Transverse colon (tissue), 4 donors: ENCODE measurements at regions of chr1 and their contacts with region 1.

Region 1: DNA sequence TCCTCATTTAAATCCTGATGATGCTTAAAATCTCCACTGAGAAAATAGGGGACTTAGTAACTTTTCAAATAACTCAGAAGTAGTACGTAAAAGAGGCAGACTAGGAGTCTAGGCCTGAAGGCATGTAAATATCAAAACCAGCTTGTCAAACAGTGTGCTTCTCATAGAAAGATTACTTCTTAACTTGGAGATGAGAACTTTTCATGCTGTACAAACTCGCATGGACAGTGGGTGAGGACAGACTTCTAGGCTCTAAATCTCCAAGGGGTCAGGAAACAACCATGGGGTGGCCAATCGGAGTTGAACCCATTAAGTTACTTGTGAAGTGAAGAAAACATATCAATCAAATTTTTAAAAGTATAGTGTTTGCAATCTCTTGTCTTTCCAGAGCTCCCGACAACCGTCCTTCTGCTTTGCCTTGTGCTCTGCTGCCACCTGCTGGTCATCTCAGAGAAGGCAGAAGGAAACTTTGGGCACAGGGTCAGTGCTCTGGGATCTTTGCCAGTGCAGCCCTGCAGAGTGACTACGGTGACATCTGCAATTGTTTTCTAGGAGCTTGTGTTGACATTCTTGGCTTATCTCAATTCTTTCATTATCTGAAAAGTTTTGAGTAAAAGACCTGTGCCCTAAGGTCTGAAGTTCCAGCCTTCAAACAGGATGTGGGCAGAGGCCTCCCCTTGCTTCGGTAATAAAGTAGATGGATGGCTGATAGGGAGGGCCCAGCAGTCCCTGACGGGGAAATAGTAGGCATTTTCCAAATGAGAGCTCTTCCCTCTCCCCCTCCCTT is 105.1 kb upstream of the PDE4B start:
- DNase-seq: peak; percentile 90
- H3K4me3 ChIP-seq: no peak overlapping the region
- H3K27ac ChIP-seq: no peak overlapping the region
- H3K4me1 ChIP-seq: peaks cover 0 to 19% (median 10%) of the 10 kb centered on the region in 4 donors
- H3K27me3 ChIP-seq: no peaks in the 10 kb centered on the region
- CTCF ChIP-seq: peak; percentile 94 to 96 (median 95)
- EP300 ChIP-seq: no peak
- POLR2A ChIP-seq: no peak

Region 2: GRCh38 chr1:65067491-65068201 is 620.0 kb before region 1 on chr1:
- in situ Hi-C with region 1: loop called in 1 of 4 experiments (anchors 25 kb)
- intact Hi-C with region 1: no loop called
- DNase-seq: peak; percentile 71
- H3K4me3 ChIP-seq: peak overlapping the region; percentile 87 to 97 (median 92)
- H3K27ac ChIP-seq: peak overlapping the region; percentile 97 to 100 (median 98)
- H3K4me1 ChIP-seq: peaks cover 18 to 44% (median 23%) of the 10 kb centered on the region in 4 donors
- H3K27me3 ChIP-seq: no peaks in the 10 kb centered on the region
- CTCF ChIP-seq: no peak
- EP300 ChIP-seq: no peak
- POLR2A ChIP-seq: peak; percentile 88

Region 3: DNA sequence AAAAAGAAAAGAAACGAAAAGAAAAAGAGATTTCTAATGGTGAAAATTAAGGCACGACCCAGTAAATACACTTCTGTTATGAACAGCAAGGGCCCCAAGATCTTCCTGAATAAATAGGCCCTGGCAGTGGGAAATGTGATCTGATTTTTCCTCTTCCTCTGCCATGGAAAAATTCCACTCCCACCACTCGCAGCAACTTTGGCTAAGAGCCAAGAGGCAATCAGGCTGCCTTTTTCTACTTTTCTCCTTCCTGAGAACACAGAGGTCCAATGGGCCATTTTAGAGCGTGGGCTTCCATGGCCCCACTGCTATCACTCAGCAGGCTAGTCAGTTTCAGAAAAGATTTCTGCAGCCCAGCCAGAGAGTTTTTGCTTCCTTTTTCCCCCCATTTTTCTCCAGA is 573.3 kb before region 1 on chr1:
- in situ Hi-C with region 1: loop called in 1 of 4 experiments (anchors 25 kb)
- intact Hi-C with region 1: no loop called
- DNase-seq: no peak
- H3K4me3 ChIP-seq: no peak overlapping the region
- H3K27ac ChIP-seq: peak overlapping the region in 2 of 4 donors; percentile 34 to 41
- H3K4me1 ChIP-seq: peaks cover 0 to 4% (median 0%) of the 10 kb centered on the region in 4 donors
- H3K27me3 ChIP-seq: no peaks in the 10 kb centered on the region
- CTCF ChIP-seq: no peak
- EP300 ChIP-seq: no peak
- POLR2A ChIP-seq: no peak

Region 4: DNA sequence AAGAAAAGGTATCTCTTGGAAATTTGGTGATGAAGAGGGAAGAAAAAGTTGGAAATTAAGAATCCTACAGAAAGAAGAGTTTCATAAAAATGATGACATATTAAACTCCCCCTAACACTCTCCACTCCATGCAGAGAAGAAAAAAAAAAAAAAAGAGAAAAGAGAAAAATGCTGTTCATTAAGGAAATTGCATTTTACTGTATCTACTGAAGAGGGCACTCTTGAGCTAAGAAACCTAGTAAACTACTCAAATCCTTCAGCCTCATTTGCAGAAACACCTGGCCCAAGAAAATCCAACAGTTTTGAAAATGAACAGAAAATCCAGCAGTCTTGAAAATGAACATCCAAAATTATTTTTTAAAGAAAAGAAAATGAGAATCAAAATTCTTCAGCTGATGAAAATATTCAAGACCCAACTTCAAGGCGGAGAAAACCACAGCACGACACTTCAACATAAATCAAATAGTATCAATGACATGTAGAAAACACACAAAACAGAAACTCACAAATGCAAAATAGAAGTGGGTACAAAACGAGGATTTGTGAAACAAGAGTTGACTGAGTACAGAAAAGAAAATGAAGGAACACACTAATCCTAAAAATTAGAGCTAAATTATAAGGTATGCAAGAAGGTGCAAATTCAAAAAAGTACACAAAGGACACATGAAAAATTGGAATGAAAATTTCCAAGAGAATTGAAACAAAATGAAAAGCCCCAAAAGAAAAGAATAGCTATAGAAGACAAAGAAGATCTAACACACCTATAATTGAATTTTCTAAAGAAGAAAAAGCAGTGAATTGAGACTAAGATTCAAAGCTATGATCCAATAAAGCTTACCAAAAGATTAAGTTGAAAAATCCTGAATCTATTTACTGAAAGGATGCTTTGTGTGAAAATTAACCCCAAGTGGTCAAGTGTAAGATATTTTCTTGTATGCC is 451.5 kb before region 1 on chr1:
- in situ Hi-C with region 1: loop called (anchors 10 to 25 kb)
- intact Hi-C with region 1: loop called (anchors 10 kb)
- DNase-seq: no peak
- H3K4me3 ChIP-seq: no peak overlapping the region
- H3K27ac ChIP-seq: no peak overlapping the region
- H3K4me1 ChIP-seq: no peaks in the 10 kb centered on the region
- H3K27me3 ChIP-seq: no peaks in the 10 kb centered on the region
- CTCF ChIP-seq: peak; percentile 40 to 64 (median 44)
- EP300 ChIP-seq: no peak
- POLR2A ChIP-seq: no peak

Region 5: GRCh38 chr1:65431111-65431705 is 256.4 kb before region 1 on chr1:
- in situ Hi-C with region 1: loop called in 3 of 4 experiments (anchors 5 to 25 kb)
- intact Hi-C with region 1: no loop called
- DNase-seq: no peak
- H3K4me3 ChIP-seq: no peak overlapping the region
- H3K27ac ChIP-seq: no peak overlapping the region
- H3K4me1 ChIP-seq: peaks cover 0 to 7% (median 0%) of the 10 kb centered on the region in 4 donors
- H3K27me3 ChIP-seq: no peaks in the 10 kb centered on the region
- CTCF ChIP-seq: peak; percentile 34 to 54 (median 53)
- EP300 ChIP-seq: no peak
- POLR2A ChIP-seq: no peak

Region 6: GRCh38 chr1:65668368-65668767 is 19.3 kb before region 1 on chr1:
- in situ Hi-C with region 1: no loop called
- intact Hi-C with region 1: no loop called
- DNase-seq: no peak
- H3K4me3 ChIP-seq: no peak overlapping the region
- H3K27ac ChIP-seq: no peak overlapping the region
- H3K4me1 ChIP-seq: no peaks in the 10 kb centered on the region
- H3K27me3 ChIP-seq: peaks cover 3% of the 10 kb centered on the region
- CTCF ChIP-seq: no peak
- EP300 ChIP-seq: no peak
- POLR2A ChIP-seq: no peak